ENCODE measurements at regions of chr17 and their contacts with region 1.

Region 1: GRCh38 chr17:32298298-32298697 is 32.7 kb downstream of the RHBDL3 start:
- DNase-seq: peak in 1 of 4 experiments; percentile 36
- ATAC-seq: peak; percentile 45; the same call in 2 of the 3 replicates
- H3K4me3 ChIP-seq: no peak overlapping the region
- H3K27ac ChIP-seq: no peak overlapping the region
- H3K4me1 ChIP-seq: peaks cover 8 to 13% of the 10 kb centered on the region in 2 experiments; a peak in 4 of 5 replicates
- H3K27me3 ChIP-seq: no peaks in the 10 kb centered on the region
- CTCF ChIP-seq: peak; percentile 10 to 27 (median 20); a peak in 3 of 6 replicates
- EP300 ChIP-seq: no peak
- POLR2A ChIP-seq: no peak
- RAD21 ChIP-seq: no peak

Region 2: DNA sequence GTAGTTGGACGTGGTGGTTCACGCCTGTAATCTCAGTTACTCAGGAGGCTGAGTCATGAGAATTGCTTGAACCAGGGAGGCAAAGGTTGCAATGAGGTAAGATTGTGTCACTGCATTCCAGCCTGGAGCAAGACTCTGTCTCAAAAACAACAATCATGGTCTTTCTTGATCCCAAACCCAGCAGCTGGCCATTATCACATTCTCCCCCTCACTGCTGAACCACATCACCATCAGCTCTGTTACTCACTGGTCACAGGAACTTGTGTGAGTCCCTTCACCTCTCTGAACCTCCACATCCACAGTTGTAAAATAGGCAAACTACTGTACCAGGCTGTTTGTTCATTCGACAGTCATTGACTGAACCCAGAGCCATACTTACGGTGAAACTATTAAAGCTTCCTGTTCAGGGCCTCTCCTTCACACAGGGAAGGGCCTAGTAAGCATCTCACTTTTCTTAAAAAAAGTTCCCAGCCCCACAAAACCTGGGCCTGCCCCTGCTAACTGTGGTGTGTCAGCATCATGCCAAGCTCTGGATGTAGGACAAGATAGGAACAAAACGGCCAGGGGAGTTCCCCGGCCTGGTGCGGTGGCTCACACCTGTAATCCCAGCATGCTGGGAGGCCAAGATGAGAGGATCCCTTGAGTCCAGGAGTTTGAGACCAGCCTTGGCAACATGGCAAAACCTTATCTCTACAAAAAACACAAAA is 543.9 kb before region 1 on chr17:
- CTCF ChIA-PET with region 1: no interaction called
- POLR2A ChIA-PET with region 1: no interaction called
- in situ Hi-C with region 1: no loop called
- intact Hi-C with region 1: no loop called
- DNase-seq: no peak
- ATAC-seq: no peak
- H3K4me3 ChIP-seq: no peak overlapping the region
- H3K27ac ChIP-seq: no peak overlapping the region
- H3K4me1 ChIP-seq: no peaks in the 10 kb centered on the region; a peak in 1 of 5 replicates
- H3K27me3 ChIP-seq: peaks cover 5 to 22% of the 10 kb centered on the region in 2 experiments; a peak in 4 of 5 replicates
- CTCF ChIP-seq: no peak
- EP300 ChIP-seq: no peak
- POLR2A ChIP-seq: no peak
- RAD21 ChIP-seq: no peak

Region 3: GRCh38 chr17:32285746-32286517 is 12.4 kb before region 1 on chr17:
- CTCF ChIA-PET with region 1: no interaction called
- POLR2A ChIA-PET with region 1: interaction called, 14 read pairs
- in situ Hi-C with region 1: no loop called
- intact Hi-C with region 1: no loop called
- DNase-seq: peak in 1 of 4 experiments; percentile 73
- ATAC-seq: peak; percentile 84
- H3K4me3 ChIP-seq: no peak overlapping the region
- H3K27ac ChIP-seq: peak overlapping the region; percentile 76
- H3K4me1 ChIP-seq: peaks cover 35 to 51% of the 10 kb centered on the region in 2 experiments
- H3K27me3 ChIP-seq: no peaks in the 10 kb centered on the region
- CTCF ChIP-seq: no peak
- EP300 ChIP-seq: no peak
- POLR2A ChIP-seq: no peak
- RAD21 ChIP-seq: no peak

Region 4: DNA sequence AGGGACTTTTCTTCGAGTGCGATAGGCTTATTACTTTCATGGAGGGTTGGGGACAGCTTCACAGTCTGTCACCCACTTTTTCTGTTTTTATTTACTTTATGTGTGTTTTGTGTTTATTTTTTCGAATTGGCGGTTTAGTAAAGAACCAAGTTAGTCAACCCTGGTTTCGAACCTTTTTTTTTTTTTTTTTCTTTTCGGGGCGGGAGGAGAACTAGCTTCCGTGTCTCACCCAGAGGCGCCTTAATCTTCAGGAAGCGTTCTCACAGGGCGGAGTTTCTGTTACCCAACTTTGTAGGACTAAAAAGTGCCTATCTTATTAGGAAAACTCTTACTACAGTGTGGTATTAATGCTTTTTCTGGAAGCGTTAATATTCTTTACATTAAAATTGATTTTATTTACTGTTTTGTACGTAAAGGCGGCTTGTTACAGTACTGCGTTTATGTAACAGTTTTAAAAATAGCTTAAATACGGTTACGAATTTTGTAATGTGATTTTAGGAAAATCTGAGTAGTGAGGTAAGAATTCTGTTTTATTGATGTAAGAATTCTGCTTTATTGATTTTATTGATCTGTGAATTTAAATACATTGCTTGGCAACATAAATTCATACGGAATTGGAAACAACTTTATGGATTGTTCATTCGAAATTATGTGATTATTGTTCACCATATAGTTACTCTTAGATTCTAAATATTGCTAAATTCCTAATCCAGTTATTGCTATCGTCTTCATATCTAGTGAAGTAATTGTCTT is 52.5 kb after region 1 on chr17:
- CTCF ChIA-PET with region 1: no interaction called
- POLR2A ChIA-PET with region 1: no interaction called
- in situ Hi-C with region 1: no loop called
- intact Hi-C with region 1: no loop called
- DNase-seq: peak in 2 of 4 experiments; percentile 39 to 70
- ATAC-seq: peak; percentile 28
- H3K4me3 ChIP-seq: peak overlapping the region; percentile 74
- H3K27ac ChIP-seq: peak overlapping the region; percentile 99
- H3K4me1 ChIP-seq: peaks cover 35% of the 10 kb centered on the region in 2 experiments; a peak in 4 of 5 replicates
- H3K27me3 ChIP-seq: no peaks in the 10 kb centered on the region
- CTCF ChIP-seq: no peak
- EP300 ChIP-seq: no peak
- POLR2A ChIP-seq: no peak
- RAD21 ChIP-seq: no peak

Measured in K562 (cell line).